Activated CD8-positive, alpha-beta memory T cell treated with anti-CD3 and anti-CD28 coated beads, Interleukin-2, amount 10 ng/mL, durations not matched to agents 7 days and 5 days (primary cell): ENCODE measurements at regions of chr1 and their contacts with region 1.

Region 1: DNA sequence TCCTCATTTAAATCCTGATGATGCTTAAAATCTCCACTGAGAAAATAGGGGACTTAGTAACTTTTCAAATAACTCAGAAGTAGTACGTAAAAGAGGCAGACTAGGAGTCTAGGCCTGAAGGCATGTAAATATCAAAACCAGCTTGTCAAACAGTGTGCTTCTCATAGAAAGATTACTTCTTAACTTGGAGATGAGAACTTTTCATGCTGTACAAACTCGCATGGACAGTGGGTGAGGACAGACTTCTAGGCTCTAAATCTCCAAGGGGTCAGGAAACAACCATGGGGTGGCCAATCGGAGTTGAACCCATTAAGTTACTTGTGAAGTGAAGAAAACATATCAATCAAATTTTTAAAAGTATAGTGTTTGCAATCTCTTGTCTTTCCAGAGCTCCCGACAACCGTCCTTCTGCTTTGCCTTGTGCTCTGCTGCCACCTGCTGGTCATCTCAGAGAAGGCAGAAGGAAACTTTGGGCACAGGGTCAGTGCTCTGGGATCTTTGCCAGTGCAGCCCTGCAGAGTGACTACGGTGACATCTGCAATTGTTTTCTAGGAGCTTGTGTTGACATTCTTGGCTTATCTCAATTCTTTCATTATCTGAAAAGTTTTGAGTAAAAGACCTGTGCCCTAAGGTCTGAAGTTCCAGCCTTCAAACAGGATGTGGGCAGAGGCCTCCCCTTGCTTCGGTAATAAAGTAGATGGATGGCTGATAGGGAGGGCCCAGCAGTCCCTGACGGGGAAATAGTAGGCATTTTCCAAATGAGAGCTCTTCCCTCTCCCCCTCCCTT is 105.1 kb upstream of the PDE4B start:
- DNase-seq: peak; percentile 82
- ATAC-seq: peak; percentile 96
- H3K4me3 Mint-ChIP-seq: no peak overlapping the region
- H3K27ac Mint-ChIP-seq: peak overlapping the region; percentile 13
- H3K4me1 Mint-ChIP-seq: peaks cover 15% of the 10 kb centered on the region
- H3K27me3 Mint-ChIP-seq: peaks cover 35% of the 10 kb centered on the region

Region 2: GRCh38 chr1:65066766-65067490 is 620.7 kb before region 1 on chr1:
- CTCF ChIA-PET with region 1: interaction called, 16 read pairs
- DNase-seq: peak; percentile 74
- ATAC-seq: peak; percentile 72
- H3K4me3 Mint-ChIP-seq: peak overlapping the region; percentile 85
- H3K27ac Mint-ChIP-seq: peak overlapping the region; percentile 76
- H3K4me1 Mint-ChIP-seq: peaks cover 37% of the 10 kb centered on the region
- H3K27me3 Mint-ChIP-seq: no peaks in the 10 kb centered on the region

Region 3: DNA sequence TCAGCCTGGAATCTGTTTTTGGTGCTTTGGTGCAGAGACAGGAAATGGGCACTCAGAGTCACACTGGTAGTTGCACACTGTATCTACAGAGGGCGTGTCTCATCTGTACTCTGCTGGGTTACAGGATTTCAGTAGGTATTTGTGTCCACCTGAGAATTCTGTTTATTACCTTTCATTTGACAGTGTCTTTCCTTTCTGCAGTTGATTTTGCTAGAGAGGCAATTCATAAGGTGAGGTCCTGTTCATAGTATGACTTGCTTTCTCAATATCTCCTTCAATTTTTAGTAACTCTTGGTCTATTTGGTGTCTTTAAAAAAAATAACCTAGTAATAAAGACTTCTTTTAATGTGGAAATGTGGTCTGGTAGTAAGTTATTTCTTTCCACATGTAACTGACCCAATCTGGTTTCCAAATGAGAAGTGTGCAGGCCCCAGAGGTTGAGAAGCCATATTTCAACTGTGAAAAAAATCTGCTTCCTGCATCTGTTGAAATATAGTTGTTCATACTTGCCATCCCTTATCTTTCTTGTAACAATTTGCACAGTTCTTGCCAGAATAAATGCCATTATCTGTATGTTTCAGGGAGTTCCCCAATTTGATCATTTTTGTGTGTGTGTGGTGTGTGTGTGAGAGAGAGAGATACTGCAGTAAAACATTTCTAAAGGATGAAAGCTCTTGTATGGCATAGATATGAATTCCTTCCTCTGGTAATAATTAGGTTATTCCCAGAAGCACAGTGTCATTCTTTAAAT is 456.7 kb before region 1 on chr1:
- CTCF ChIA-PET with region 1: interaction called, 40 read pairs
- DNase-seq: peak; percentile 58
- ATAC-seq: peak; percentile 82
- H3K4me3 Mint-ChIP-seq: no peak overlapping the region
- H3K27ac Mint-ChIP-seq: peak overlapping the region; percentile 65
- H3K4me1 Mint-ChIP-seq: peaks cover 34% of the 10 kb centered on the region
- H3K27me3 Mint-ChIP-seq: no peaks in the 10 kb centered on the region

Region 4: DNA sequence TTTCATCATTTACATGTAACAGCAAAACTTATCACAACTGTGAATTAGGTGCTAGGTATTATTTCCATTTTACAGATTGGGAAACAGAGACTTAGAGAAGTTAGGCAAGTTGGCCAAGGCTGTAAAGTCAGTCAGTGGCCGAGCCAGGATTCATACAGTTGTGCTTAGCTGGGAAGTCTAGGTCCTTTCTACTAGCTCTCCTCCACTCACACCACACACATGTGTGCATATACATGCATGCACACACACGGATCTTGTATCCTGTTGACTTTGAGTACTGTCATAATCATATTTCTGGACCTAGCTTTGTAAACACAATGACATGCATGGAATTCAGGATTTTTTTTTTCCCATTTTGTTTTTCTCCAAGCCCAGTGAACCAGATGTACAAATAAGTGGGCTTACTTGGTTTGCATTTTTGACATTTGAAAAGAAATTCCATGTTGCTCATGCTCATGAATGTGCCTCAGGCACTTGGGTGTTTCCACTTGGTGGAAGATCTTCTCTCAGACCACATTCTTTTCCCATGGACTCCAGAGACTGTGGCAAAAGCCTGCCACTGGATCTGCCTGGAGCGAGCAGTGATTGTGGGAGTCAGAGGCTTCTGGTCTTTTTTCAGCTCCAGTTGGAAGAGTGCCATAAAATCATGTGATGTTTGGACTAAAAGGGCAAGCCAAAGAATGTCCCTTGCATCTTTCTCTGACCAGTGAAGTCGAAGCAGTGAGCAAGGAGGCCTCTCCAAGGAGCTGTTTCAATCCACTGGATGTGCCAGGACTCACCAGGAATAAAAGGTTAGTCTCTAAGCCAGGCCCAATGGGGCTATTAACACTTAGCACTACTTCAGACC is 439.9 kb before region 1 on chr1:
- CTCF ChIA-PET with region 1: interaction called, 10 read pairs
- DNase-seq: no peak
- ATAC-seq: no peak
- H3K4me3 Mint-ChIP-seq: no peak overlapping the region
- H3K27ac Mint-ChIP-seq: no peak overlapping the region
- H3K4me1 Mint-ChIP-seq: no peaks in the 10 kb centered on the region
- H3K27me3 Mint-ChIP-seq: peaks cover 26% of the 10 kb centered on the region

Region 5: DNA sequence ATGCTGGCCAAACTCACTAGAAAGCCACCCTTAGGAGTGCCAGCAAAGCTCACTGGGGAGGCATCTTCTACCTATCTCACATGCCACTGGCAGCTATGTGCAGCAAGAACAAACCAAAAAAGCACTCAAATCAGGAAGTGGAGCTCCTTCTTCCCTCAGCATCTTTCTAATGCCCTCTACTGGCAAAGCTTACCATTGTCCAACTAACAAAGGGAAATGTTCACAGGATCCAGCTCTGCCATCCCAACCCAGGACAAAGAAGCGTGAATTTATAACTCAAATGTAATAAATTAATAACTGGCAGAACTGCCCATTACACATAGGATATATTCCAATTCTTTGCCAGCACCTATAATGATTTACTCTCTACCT is 228.2 kb before region 1 on chr1:
- CTCF ChIA-PET with region 1: interaction called, 11 read pairs
- DNase-seq: no peak
- ATAC-seq: peak; percentile 73
- H3K4me3 Mint-ChIP-seq: no peak overlapping the region
- H3K27ac Mint-ChIP-seq: no peak overlapping the region
- H3K4me1 Mint-ChIP-seq: peaks cover 22% of the 10 kb centered on the region
- H3K27me3 Mint-ChIP-seq: peaks cover 4% of the 10 kb centered on the region

Region 6: GRCh38 chr1:65812065-65812464 is 124.4 kb after region 1 on chr1:
- CTCF ChIA-PET with region 1: no interaction called
- DNase-seq: peak; percentile 94
- ATAC-seq: peak; percentile 96
- H3K4me3 Mint-ChIP-seq: peak overlapping the region; percentile 18
- H3K27ac Mint-ChIP-seq: peak overlapping the region; percentile 93
- H3K4me1 Mint-ChIP-seq: peaks cover 43% of the 10 kb centered on the region
- H3K27me3 Mint-ChIP-seq: peaks cover 25% of the 10 kb centered on the region